ENCODE measurements at regions of chr5 and their contacts with region 1.

Region 1: GRCh38 chr5:73448463-73449136 is at the start of gene FOXD1:
- DNase-seq: peak in 6 of 14 experiments; percentile 26 to 63 (median 46)
- ATAC-seq: peak; percentile 29
- H3K4me3 ChIP-seq: peak within 1 kb of the TSS; percentile 54
- H3K4me3 Mint-ChIP-seq: peak within 1 kb of the TSS; percentile 88
- H3K27ac ChIP-seq: no peak within 1 kb of the TSS
- H3K27ac Mint-ChIP-seq: peak within 1 kb of the TSS; percentile 68
- H3K4me1 ChIP-seq: peaks cover 41% of the 10 kb centered on the region
- H3K4me1 Mint-ChIP-seq: peaks cover 20% of the 10 kb centered on the region
- H3K27me3 ChIP-seq: peaks cover 65 to 84% of the 10 kb centered on the region in 2 experiments
- H3K27me3 Mint-ChIP-seq: peaks cover 87% of the 10 kb centered on the region
- CTCF ChIP-seq: no peak
- total RNA-seq, gene FOXD1: not detected

Region 2: DNA sequence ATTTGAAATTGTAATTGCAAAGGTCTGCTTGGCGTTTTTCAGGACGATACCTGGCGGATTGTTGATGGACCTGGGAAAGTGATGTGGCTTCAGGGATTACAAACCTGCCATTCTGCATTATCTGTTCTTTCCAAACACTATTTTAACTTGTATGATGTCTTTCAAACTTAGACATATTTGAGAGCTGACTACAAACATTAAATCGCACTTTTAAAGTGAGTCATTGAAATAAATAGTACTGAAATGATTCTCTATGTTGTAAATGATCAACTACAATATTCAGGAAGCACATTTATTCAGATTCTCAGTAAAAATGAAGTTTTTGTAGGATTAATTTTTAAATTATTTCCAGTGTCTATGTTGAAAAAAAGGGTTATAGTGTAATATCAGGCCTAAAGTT is 360.6 kb before region 1 on chr5:
- CTCF ChIA-PET with region 1: interaction called, 7 read pairs
- POLR2A ChIA-PET with region 1: no interaction called
- intact Hi-C with region 1: loop called (anchors 2 to 5 kb)
- DNase-seq: no peak
- ATAC-seq: no peak
- H3K4me3 ChIP-seq: no peak overlapping the region
- H3K4me3 Mint-ChIP-seq: no peak overlapping the region
- H3K27ac ChIP-seq: no peak overlapping the region
- H3K27ac Mint-ChIP-seq: no peak overlapping the region
- H3K4me1 ChIP-seq: no peaks in the 10 kb centered on the region
- H3K4me1 Mint-ChIP-seq: no peaks in the 10 kb centered on the region
- H3K27me3 ChIP-seq: no peaks in the 10 kb centered on the region
- H3K27me3 Mint-ChIP-seq: peaks cover 30% of the 10 kb centered on the region
- CTCF ChIP-seq: no peak

Region 3: GRCh38 chr5:73215891-73216610 is 232.5 kb before region 1 on chr5:
- CTCF ChIA-PET with region 1: interaction called, 9 read pairs
- POLR2A ChIA-PET with region 1: interaction called, 13 read pairs
- intact Hi-C with region 1: loop called (anchors 2 kb)
- DNase-seq: peak; percentile 28 to 80 (median 50)
- ATAC-seq: peak; percentile 96
- H3K4me3 ChIP-seq: peak overlapping the region; percentile 28
- H3K4me3 Mint-ChIP-seq: peak overlapping the region; percentile 49
- H3K27ac ChIP-seq: no peak overlapping the region
- H3K27ac Mint-ChIP-seq: no peak overlapping the region
- H3K4me1 ChIP-seq: peaks cover 13% of the 10 kb centered on the region
- H3K4me1 Mint-ChIP-seq: peaks cover 12% of the 10 kb centered on the region
- H3K27me3 ChIP-seq: peaks cover 38 to 62% of the 10 kb centered on the region in 2 experiments
- H3K27me3 Mint-ChIP-seq: peaks cover 100% of the 10 kb centered on the region
- CTCF ChIP-seq: peak; percentile 71

Region 4: DNA sequence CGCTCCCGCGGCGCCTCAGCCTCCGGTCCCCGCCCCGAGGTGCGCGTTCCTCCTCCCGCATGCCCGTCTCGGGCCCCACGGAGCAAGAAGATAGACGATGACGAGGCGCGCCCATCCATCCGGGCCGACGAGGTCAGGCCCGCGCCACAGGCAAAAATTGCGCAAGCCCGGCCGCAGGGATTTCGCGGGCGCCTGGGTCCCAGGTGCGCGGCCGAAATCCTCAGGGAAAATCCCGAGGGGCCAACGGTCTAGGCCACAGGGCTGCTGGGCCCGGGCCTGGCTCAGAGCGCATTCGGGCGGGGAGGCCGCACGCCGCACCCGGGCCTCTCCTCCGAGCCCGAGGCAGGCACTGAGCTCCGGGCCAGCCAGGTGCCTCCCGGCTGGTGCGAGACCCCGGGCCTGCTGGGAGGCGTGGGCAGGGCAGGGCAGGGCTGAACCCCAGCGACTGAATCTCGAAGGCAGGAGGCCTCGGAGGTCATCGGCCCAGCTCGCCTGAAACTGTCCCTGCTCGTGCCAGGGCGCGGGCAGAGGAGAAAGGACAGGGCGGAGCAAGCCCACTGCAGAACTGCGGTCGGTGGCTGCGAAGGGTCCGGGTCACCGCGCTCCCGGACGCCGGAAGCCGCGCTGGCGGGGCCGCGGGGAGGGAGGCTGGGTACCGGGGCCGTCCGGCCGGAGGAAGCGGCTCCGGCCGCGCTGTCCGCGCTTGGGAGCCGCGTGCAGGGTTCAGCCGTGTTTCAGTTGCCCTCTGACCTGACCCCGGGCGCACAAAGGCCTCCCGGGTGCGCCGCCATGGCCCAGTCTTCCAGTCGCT is 66.8 kb before region 1 on chr5:
- CTCF ChIA-PET with region 1: no interaction called
- POLR2A ChIA-PET with region 1: no interaction called
- intact Hi-C with region 1: loop called (anchors 5 kb)
- DNase-seq: peak in 3 of 14 experiments; percentile 9 to 22 (median 21)
- ATAC-seq: no peak
- H3K4me3 ChIP-seq: no peak overlapping the region
- H3K4me3 Mint-ChIP-seq: no peak overlapping the region
- H3K27ac ChIP-seq: no peak overlapping the region
- H3K27ac Mint-ChIP-seq: no peak overlapping the region
- H3K4me1 ChIP-seq: peaks cover 36% of the 10 kb centered on the region
- H3K4me1 Mint-ChIP-seq: peaks cover 38% of the 10 kb centered on the region
- H3K27me3 ChIP-seq: peaks cover 64 to 65% of the 10 kb centered on the region in 2 experiments
- H3K27me3 Mint-ChIP-seq: peaks cover 66% of the 10 kb centered on the region
- CTCF ChIP-seq: no peak

Region 5: DNA sequence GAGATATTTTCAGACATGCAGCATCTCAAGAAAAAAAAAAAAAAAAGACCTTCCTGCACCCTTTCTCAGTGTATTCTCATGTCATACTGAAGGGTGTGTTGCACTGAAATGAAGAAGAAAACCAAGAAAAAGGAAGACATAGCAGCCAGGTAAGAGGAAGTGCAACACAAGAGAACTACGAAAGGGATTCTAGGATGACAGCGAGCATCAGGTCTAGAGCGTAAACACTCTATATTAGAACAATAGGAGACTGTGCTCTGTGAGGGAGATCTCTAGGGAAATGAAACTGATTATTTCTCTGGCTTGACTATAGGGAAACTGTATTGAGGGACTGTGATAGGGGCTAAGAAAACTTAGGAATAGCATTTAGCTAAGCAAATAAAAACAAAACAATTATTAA is 79.6 kb after region 1 on chr5:
- CTCF ChIA-PET with region 1: no interaction called
- POLR2A ChIA-PET with region 1: no interaction called
- intact Hi-C with region 1: no loop called
- DNase-seq: no peak
- ATAC-seq: no peak
- H3K4me3 ChIP-seq: no peak overlapping the region
- H3K4me3 Mint-ChIP-seq: no peak overlapping the region
- H3K27ac ChIP-seq: no peak overlapping the region
- H3K27ac Mint-ChIP-seq: no peak overlapping the region
- H3K4me1 ChIP-seq: no peaks in the 10 kb centered on the region
- H3K4me1 Mint-ChIP-seq: no peaks in the 10 kb centered on the region
- H3K27me3 ChIP-seq: peaks cover 2 to 14% of the 10 kb centered on the region in 2 experiments
- H3K27me3 Mint-ChIP-seq: peaks cover 37% of the 10 kb centered on the region
- CTCF ChIP-seq: no peak